ENCODE measurements at regions of chr1 and their contacts with region 1.

Region 1: DNA sequence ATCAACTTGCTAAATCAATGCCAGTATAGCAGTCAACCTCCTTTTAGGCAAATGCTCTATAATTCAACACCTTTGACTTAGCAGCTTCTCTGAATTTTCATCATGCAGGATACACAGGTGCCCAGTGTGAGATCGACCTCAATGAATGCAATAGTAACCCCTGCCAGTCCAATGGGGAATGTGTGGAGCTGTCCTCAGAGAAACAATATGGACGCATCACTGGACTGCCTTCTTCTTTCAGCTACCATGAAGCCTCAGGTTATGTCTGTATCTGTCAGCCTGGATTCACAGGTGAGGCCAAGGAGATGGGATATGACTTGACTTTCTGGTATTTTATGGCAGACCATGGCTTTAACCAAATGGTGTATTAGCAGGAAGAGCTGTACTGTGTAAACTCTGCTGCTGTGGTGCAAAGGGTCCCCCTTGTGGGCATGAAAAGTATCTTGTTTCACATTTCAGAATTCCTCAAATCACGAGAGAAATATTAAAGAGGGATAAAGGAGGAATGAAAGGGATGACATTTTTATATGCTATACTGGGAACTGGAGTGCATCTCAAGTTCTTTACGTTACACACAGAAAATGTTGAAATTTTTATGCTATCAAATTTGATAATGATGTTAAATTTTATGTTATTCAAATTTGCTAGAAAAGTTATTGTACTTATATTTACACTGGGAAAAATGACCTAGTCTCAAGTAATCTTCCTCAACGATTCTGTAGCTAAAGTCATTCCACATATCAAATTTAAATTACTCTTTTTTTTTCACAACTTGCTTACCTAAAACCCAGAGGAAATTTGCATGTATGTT is 88.9 kb downstream of the CRB1 start:
- DNase-seq: peak; percentile 58
- ATAC-seq: peak; percentile 83
- H3K4me3 ChIP-seq: no peak overlapping the region
- H3K27ac ChIP-seq: no peak overlapping the region
- H3K4me1 ChIP-seq: no peaks in the 10 kb centered on the region
- H3K27me3 ChIP-seq: no peaks in the 10 kb centered on the region
- CTCF ChIP-seq: peak; percentile 70
- POLR2A ChIP-seq: no peak
- RAD21 ChIP-seq: peak; percentile 79

Region 2: DNA sequence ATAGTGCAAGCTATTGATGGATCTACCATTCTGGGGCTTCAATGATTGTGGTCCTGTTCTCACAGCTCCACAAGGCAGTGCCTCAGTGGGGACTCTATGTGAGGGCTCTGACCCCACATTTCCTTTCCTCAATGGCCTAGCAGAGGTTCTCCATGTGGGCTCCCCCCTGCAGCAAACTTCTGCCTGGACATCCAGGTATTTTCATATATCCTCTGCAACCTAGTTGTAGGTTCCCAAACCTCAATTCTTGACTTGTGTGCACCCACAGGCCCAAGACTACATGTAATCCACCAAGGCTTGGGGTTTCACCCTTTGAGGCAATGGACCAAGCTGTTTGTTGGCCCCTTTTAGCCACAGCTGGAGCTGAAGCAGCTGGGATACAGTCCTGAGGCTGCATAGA is 618.2 kb before region 1 on chr1:
- CTCF ChIA-PET with region 1: no interaction called
- POLR2A ChIA-PET with region 1: no interaction called
- dilution Hi-C with region 1: no loop called
- in situ Hi-C with region 1: no loop called
- intact Hi-C with region 1: loop called (anchors 5 kb)
- DNase-seq: no peak
- ATAC-seq: no peak
- H3K4me3 ChIP-seq: no peak overlapping the region
- H3K27ac ChIP-seq: no peak overlapping the region
- H3K4me1 ChIP-seq: no peaks in the 10 kb centered on the region
- H3K27me3 ChIP-seq: no peaks in the 10 kb centered on the region
- CTCF ChIP-seq: no peak
- POLR2A ChIP-seq: no peak
- RAD21 ChIP-seq: no peak

Region 3: GRCh38 chr1:197327776-197328364 is 29.1 kb before region 1 on chr1:
- CTCF ChIA-PET with region 1: interaction called, 5 read pairs
- POLR2A ChIA-PET with region 1: no interaction called
- dilution Hi-C with region 1: no loop called
- in situ Hi-C with region 1: no loop called
- intact Hi-C with region 1: loop called (anchors 2 kb)
- DNase-seq: peak; percentile 16
- ATAC-seq: peak; percentile 49; the same call in 1 of the 2 replicates
- H3K4me3 ChIP-seq: no peak overlapping the region
- H3K27ac ChIP-seq: no peak overlapping the region
- H3K4me1 ChIP-seq: no peaks in the 10 kb centered on the region
- H3K27me3 ChIP-seq: peaks cover 6% of the 10 kb centered on the region
- CTCF ChIP-seq: peak; percentile 61
- POLR2A ChIP-seq: no peak
- RAD21 ChIP-seq: peak; percentile 48

Measured in IMR-90 (cell line).